CD14-positive monocyte (primary cell): ENCODE measurements at regions of chr1 and their contacts with region 1.

Region 1: GRCh38 chr1:43763497-43763973 is 56.2 kb downstream of the ST3GAL3 start:
- DNase-seq: peak; percentile 56 to 74 (median 73)
- H3K4me3 ChIP-seq: no peak overlapping the region
- H3K4me3 Mint-ChIP-seq: no peak overlapping the region
- H3K27ac ChIP-seq: no peak overlapping the region
- H3K27ac Mint-ChIP-seq: peak overlapping the region in 3 of 7 donors; percentile 67 to 71 (median 68)
- H3K4me1 ChIP-seq: peaks cover 12 to 23% of the 10 kb centered on the region in 2 donors
- H3K4me1 Mint-ChIP-seq: peaks cover 13% of the 10 kb centered on the region
- H3K27me3 ChIP-seq: no peaks in the 10 kb centered on the region
- H3K27me3 Mint-ChIP-seq: no peaks in the 10 kb centered on the region
- CTCF ChIP-seq: peak; percentile 88

Region 2: GRCh38 chr1:43805345-43805744 is 41.8 kb after region 1 on chr1:
- intact Hi-C with region 1: loop called in 1 of 2 experiments (anchors 5 kb)
- DNase-seq: no peak
- H3K4me3 ChIP-seq: no peak overlapping the region
- H3K4me3 Mint-ChIP-seq: no peak overlapping the region
- H3K27ac ChIP-seq: no peak overlapping the region
- H3K27ac Mint-ChIP-seq: no peak overlapping the region
- H3K4me1 ChIP-seq: peaks cover 22 to 25% of the 10 kb centered on the region in 2 donors
- H3K4me1 Mint-ChIP-seq: peaks cover 34% of the 10 kb centered on the region
- H3K27me3 ChIP-seq: no peaks in the 10 kb centered on the region
- H3K27me3 Mint-ChIP-seq: no peaks in the 10 kb centered on the region
- CTCF ChIP-seq: no peak

Region 3: GRCh38 chr1:43934101-43934985 is 170.8 kb after region 1 on chr1:
- intact Hi-C with region 1: loop called (anchors 1 to 2 kb)
- DNase-seq: peak; percentile 63 to 67 (median 67)
- H3K4me3 ChIP-seq: peak overlapping the region in 1 of 3 experiments; percentile 73
- H3K4me3 Mint-ChIP-seq: peak overlapping the region; percentile 64 to 84
- H3K27ac ChIP-seq: no peak overlapping the region
- H3K27ac Mint-ChIP-seq: peak overlapping the region in 1 of 7 donors; percentile 13
- H3K4me1 ChIP-seq: peaks cover 35 to 39% of the 10 kb centered on the region in 2 donors
- H3K4me1 Mint-ChIP-seq: peaks cover 44% of the 10 kb centered on the region
- H3K27me3 ChIP-seq: peaks cover 0 to 7% of the 10 kb centered on the region in 2 donors
- H3K27me3 Mint-ChIP-seq: peaks cover 6 to 25% (median 11%) of the 10 kb centered on the region in 3 donors
- CTCF ChIP-seq: peak; percentile 98

Region 4: GRCh38 chr1:44029906-44030604 is 266.5 kb after region 1 on chr1:
- intact Hi-C with region 1: loop called in 1 of 2 experiments (anchors 10 kb)
- DNase-seq: peak; percentile 70 to 78 (median 72)
- H3K4me3 ChIP-seq: peak overlapping the region; percentile 63 to 87 (median 83)
- H3K4me3 Mint-ChIP-seq: peak overlapping the region; percentile 92 to 99
- H3K27ac ChIP-seq: peak overlapping the region in 1 of 2 donors; percentile 5
- H3K27ac Mint-ChIP-seq: peak overlapping the region in 5 of 7 donors; percentile 70 to 87 (median 80)
- H3K4me1 ChIP-seq: peaks cover 16 to 23% of the 10 kb centered on the region in 2 donors
- H3K4me1 Mint-ChIP-seq: peaks cover 19% of the 10 kb centered on the region
- H3K27me3 ChIP-seq: peaks cover 2 to 25% of the 10 kb centered on the region in 2 donors
- H3K27me3 Mint-ChIP-seq: peaks cover 20 to 38% (median 32%) of the 10 kb centered on the region in 3 donors
- CTCF ChIP-seq: no peak